ENCODE measurements at regions of chr12 and their contacts with region 1.

Region 1: GRCh38 chr12:93397412-93397811 is 19.7 kb downstream of the NUDT4 start:
- DNase-seq: no peak
- H3K4me3 ChIP-seq: no peak overlapping the region
- H3K27ac ChIP-seq: no peak overlapping the region
- H3K4me1 ChIP-seq: no peaks in the 10 kb centered on the region
- H3K27me3 ChIP-seq: no peaks in the 10 kb centered on the region

Region 2: DNA sequence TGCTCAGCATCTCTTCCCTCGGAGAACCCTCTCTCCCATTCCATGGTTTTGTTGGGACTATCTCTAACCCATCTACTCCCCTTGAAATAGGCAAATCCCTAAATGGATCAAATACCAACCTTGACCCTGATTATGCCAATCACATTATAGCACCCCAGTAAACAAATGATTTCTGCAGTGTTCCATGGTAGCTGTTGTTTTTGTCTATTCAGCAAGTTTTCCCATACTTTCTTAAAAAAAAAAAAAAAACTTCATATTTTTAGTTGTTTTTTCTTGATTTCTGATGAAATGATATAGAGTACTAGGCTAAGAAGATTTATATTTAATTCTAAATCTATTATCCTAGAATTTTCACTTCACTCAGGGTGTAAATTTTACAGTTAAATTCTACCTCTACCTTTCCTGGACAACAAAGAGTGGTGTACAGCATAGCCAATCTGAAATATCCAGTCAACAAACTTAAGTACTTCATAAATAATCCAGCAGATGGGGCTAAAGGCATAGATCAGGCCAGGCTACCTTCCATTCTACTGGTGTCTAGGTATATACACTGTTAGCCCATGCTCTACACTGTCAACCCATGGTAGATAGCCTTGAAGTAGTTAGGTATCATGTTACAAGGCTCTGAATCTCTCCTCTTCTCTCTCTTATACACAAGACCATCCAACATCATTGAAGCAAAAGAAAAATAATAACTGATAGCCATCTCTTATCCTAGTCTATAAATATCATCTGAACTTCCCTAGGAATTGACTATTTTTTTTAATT is 612.4 kb before region 1 on chr12:
- CTCF ChIA-PET with region 1: interaction called, 30 read pairs
- POLR2A ChIA-PET with region 1: no interaction called
- DNase-seq: peak; percentile 71 to 86 (median 85)
- H3K4me3 ChIP-seq: no peak overlapping the region
- H3K27ac ChIP-seq: no peak overlapping the region
- H3K4me1 ChIP-seq: peaks cover 0 to 8% (median 0%) of the 10 kb centered on the region in 4 experiments
- H3K27me3 ChIP-seq: no peaks in the 10 kb centered on the region

Region 3: GRCh38 chr12:93025145-93025805 is 372.1 kb before region 1 on chr12:
- CTCF ChIA-PET with region 1: interaction called, 11 read pairs
- POLR2A ChIA-PET with region 1: no interaction called
- DNase-seq: peak; percentile 55 to 71 (median 66)
- H3K4me3 ChIP-seq: no peak overlapping the region
- H3K27ac ChIP-seq: no peak overlapping the region
- H3K4me1 ChIP-seq: no peaks in the 10 kb centered on the region
- H3K27me3 ChIP-seq: peaks cover 0 to 3% (median 0%) of the 10 kb centered on the region in 5 experiments

Region 4: GRCh38 chr12:93109551-93110203 is 287.7 kb before region 1 on chr12:
- CTCF ChIA-PET with region 1: interaction called, 11 read pairs
- POLR2A ChIA-PET with region 1: no interaction called
- DNase-seq: no peak
- H3K4me3 ChIP-seq: no peak overlapping the region
- H3K27ac ChIP-seq: no peak overlapping the region
- H3K4me1 ChIP-seq: peaks cover 0 to 12% (median 6%) of the 10 kb centered on the region in 4 experiments
- H3K27me3 ChIP-seq: no peaks in the 10 kb centered on the region

Region 5: GRCh38 chr12:93214523-93215289 is 182.7 kb before region 1 on chr12:
- CTCF ChIA-PET with region 1: no interaction called
- POLR2A ChIA-PET with region 1: no interaction called
- DNase-seq: no peak
- H3K4me3 ChIP-seq: no peak overlapping the region
- H3K27ac ChIP-seq: no peak overlapping the region
- H3K4me1 ChIP-seq: no peaks in the 10 kb centered on the region
- H3K27me3 ChIP-seq: no peaks in the 10 kb centered on the region

Region 6: DNA sequence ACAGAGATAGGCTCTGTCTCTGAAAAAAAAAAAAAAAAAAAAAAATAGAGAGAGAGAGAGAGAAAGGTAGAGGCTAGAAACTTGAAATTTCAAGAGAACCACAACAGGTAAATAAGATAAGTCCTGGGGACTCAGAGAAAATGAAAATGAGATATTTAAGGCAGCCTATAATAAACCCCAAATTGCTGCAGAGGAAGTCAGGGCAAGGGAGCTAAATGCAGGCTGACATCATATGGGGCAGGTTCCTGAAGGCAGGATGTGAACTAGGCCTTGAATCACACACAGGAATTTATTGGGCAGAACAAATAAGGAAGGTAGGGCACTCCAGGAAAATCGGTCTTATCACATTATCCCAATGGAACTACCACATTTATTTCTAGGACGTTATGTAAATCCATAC is 74.6 kb before region 1 on chr12:
- CTCF ChIA-PET with region 1: no interaction called
- POLR2A ChIA-PET with region 1: no interaction called
- DNase-seq: no peak
- H3K4me3 ChIP-seq: no peak overlapping the region
- H3K27ac ChIP-seq: no peak overlapping the region
- H3K4me1 ChIP-seq: no peaks in the 10 kb centered on the region
- H3K27me3 ChIP-seq: no peaks in the 10 kb centered on the region

Region 7: GRCh38 chr12:93419388-93420034 is 22.1 kb after region 1 on chr12:
- CTCF ChIA-PET with region 1: interaction called, 13 read pairs
- POLR2A ChIA-PET with region 1: no interaction called
- DNase-seq: peak; percentile 55 to 78 (median 75)
- H3K4me3 ChIP-seq: no peak overlapping the region
- H3K27ac ChIP-seq: no peak overlapping the region
- H3K4me1 ChIP-seq: peaks cover 0 to 17% (median 9%) of the 10 kb centered on the region in 4 experiments
- H3K27me3 ChIP-seq: no peaks in the 10 kb centered on the region

Region 8: DNA sequence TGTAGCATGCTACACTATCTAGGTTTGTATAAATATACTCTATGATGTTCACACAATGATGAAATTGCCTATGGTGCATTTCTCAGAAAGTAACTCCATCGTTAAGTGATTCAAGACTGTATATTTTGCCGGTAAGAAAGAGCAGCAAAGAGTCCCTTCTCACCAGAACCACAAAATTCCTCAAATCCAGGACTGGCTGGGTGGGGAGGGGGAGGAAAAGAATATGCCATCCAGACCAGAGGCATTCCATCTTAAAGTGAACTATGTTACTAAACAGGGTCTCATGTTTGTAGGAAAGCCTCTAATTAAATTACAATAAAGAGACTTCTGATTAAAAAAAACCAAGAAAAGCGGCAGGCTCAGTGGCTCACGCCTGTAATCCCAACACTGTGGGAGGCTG is 32.9 kb after region 1 on chr12:
- CTCF ChIA-PET with region 1: no interaction called
- POLR2A ChIA-PET with region 1: no interaction called
- DNase-seq: no peak
- H3K4me3 ChIP-seq: no peak overlapping the region
- H3K27ac ChIP-seq: no peak overlapping the region
- H3K4me1 ChIP-seq: peaks cover 9 to 33% (median 20%) of the 10 kb centered on the region in 4 experiments
- H3K27me3 ChIP-seq: no peaks in the 10 kb centered on the region

Region 9: DNA sequence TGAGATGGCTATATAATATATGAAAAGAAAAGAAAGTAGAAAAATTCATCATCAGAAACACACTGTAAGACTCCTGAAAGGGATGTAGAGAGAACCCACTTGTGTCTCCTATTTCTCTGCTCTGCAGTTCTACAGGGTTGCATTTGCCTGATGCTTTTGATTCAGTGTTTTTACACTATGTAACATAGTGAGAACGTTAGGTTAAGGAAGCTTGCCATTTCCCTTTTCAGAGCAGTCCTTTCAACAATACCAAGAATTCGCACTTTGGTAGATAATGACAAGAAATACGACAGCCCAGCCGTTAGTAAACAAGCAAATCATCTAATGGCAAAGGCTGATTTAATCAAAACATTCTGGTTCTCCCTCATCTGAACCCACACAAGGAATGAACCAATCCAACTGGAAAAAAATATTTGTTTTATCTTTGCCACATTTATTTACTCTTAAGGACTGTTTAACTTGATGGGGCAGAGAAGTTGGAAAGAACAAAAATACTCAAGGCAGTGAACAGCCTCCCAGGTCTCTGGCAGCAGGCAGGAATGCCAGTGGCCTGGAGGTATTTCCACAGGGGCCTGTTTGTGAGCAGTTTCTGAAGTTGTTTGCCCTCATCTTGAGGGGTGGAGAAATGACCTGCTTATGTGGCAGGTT is 144.3 kb after region 1 on chr12:
- CTCF ChIA-PET with region 1: no interaction called
- POLR2A ChIA-PET with region 1: no interaction called
- DNase-seq: peak in 2 of 3 donors; percentile 21 to 37
- H3K4me3 ChIP-seq: peak overlapping the region in 3 of 7 experiments; percentile 12 to 46 (median 31)
- H3K27ac ChIP-seq: peak overlapping the region; percentile 62 to 73
- H3K4me1 ChIP-seq: peaks cover 19 to 37% (median 30%) of the 10 kb centered on the region in 4 experiments
- H3K27me3 ChIP-seq: no peaks in the 10 kb centered on the region